Activated CD8-positive, alpha-beta memory T cell treated with anti-CD3 and anti-CD28 coated beads, Interleukin-2, amount 10 ng/mL, durations not matched to agents 7 days and 5 days (primary cell): ENCODE measurements at regions of chr19 and their contacts with region 1.

Region 1: DNA sequence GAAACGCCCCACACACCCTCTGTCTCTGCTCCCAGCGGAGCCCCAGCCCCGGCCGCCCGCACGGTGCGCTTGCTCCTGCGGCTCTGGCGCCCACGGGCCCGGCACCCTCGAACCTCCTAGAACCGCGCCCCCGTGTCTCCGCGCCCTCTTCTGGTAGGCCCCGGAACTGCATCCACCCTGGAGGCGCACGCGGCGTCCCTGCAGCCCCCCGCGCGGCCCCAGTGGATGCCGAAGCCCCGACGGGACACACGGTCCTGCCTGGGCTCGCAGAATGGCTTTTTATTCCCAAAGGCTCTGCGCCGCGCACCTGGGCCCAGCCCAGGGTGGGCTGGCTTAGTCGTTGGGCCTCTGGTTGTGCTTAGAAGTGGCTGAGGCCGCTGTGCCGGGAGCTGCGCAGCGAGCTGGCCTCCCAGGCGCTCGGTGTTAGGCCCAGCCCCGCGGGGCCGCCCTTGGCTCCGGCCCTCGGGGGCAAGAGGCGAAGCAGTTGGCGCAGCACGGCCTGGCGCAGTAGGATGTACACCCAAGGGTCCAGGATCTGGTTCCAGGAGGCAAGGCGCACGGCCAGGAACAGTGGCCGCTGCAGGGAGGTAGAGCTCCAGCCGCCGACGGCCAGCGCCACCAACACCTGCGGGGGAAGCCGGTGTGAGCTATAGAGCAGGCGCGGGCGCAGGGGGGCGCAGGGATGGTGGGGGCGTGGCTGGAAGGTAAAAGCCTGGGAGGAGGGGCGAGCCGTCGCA is 2.8 kb downstream of the PTGER1 start:
- DNase-seq: peak; percentile 85
- ATAC-seq: peak; percentile 79
- H3K4me3 Mint-ChIP-seq: no peak overlapping the region
- H3K27ac Mint-ChIP-seq: no peak overlapping the region
- H3K4me1 Mint-ChIP-seq: peaks cover 26% of the 10 kb centered on the region
- H3K27me3 Mint-ChIP-seq: peaks cover 16% of the 10 kb centered on the region

Region 2: DNA sequence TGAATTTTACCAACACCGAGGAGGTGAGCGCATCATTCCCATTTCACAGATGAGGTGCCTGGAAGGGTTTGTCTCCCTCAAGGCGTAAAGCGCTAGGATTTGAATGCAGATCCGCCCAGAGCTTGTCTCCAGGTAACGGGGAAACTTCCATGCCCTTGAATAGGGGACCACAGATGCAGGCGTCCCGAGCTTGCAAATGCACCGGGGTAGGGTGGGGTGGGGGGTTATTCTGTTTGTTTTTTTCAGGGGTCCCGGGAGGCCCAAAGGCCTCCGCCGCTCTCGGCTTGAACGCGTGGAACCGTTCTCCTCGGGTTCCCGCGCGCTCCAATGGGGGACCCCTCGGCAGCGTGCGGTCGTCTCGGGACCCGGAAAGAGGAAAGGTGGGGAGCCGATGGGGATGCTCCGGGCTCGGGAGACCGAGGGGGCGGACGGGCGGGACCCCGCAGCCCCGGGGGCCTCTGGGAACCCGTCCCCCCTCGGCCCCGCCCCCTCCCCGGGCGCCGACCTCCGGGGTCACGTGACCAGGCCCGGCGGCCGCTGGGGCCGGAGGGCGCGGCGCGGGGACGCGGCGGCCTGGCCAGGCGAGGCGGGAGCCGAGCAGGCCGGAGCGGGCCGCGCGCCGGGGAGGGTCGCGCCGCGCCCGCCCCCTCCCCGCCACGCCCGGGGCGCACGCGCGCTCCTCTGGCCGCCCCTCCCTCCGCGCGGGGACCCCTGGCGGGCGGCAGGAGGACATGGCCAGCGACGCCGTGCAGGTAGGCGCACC is 39.4 kb before region 1 on chr19 and contains the start of gene PKN1:
- CTCF ChIA-PET with region 1: interaction called, 90 read pairs
- DNase-seq: peak; percentile 67
- ATAC-seq: peak; percentile 66
- H3K4me3 Mint-ChIP-seq: peak within 1 kb of the TSS; percentile 77
- H3K27ac Mint-ChIP-seq: peak within 1 kb of the TSS; percentile 76
- H3K4me1 Mint-ChIP-seq: peaks cover 32% of the 10 kb centered on the region
- H3K27me3 Mint-ChIP-seq: peaks cover 5% of the 10 kb centered on the region
- total RNA-seq, gene PKN1: 224 to 236 TPM

Region 3: DNA sequence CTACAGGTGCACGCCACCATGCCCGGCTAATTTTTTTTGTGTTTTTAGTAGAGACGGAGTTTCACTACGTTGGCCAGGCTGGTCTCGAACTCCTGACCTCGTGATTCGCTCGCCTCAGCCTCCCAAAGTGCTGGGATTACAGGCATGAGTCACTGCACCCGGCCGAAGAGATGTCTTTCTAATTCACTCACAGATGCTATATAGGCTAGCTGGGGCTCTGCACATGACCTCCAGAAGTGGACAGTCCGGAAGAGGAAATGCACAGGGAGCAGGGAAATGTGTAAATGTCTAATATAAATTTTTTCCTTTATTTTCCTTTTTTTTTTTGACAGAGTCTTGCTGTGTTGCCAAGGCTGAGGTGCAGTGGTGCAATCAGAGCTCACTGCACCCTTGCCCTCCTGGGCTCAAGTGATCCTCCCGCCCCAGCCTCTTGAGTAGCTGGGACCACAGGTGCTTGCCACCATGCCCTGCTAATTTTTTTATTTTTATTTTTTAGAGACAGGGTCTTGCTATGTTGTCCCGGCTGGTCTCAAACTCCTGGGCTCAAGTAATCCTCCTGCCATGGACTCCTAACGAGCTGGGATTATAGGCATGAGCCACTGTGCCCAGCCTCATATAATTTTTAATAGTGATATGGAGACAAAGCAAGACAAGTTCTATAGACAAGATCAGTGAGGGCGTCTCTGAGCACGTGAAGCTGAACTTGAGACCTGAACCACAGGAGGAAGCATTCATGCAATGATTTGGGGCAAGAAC is 15.2 kb after region 1 on chr19:
- CTCF ChIA-PET with region 1: interaction called, 22 read pairs
- DNase-seq: no peak
- ATAC-seq: no peak
- H3K4me3 Mint-ChIP-seq: no peak overlapping the region
- H3K27ac Mint-ChIP-seq: no peak overlapping the region
- H3K4me1 Mint-ChIP-seq: peaks cover 6% of the 10 kb centered on the region
- H3K27me3 Mint-ChIP-seq: no peaks in the 10 kb centered on the region

Region 4: GRCh38 chr19:14496028-14496833 is 23.9 kb after region 1 on chr19 and contains the start of gene GIPC1:
- CTCF ChIA-PET with region 1: interaction called, 16 read pairs
- DNase-seq: peak; percentile 83
- ATAC-seq: peak; percentile 96
- H3K4me3 Mint-ChIP-seq: peak within 1 kb of the TSS; percentile 78
- H3K27ac Mint-ChIP-seq: peak within 1 kb of the TSS; percentile 24
- H3K4me1 Mint-ChIP-seq: peaks cover 18% of the 10 kb centered on the region
- H3K27me3 Mint-ChIP-seq: peaks cover 7% of the 10 kb centered on the region
- total RNA-seq, gene GIPC1: 26.2 to 30.8 TPM